Colonic mucosa (tissue), 4 donors: ENCODE measurements at regions of chr6 and their contacts with region 1.

Region 1: GRCh38 chr6:116969211-116969863 is 92.3 kb downstream of the RFX6 start:
- DNase-seq: peak; percentile 47
- H3K4me3 ChIP-seq: no peak overlapping the region
- H3K27ac ChIP-seq: no peak overlapping the region
- H3K4me1 ChIP-seq: no peaks in the 10 kb centered on the region
- H3K27me3 ChIP-seq: no peaks in the 10 kb centered on the region
- CTCF ChIP-seq: peak; percentile 54

Region 2: DNA sequence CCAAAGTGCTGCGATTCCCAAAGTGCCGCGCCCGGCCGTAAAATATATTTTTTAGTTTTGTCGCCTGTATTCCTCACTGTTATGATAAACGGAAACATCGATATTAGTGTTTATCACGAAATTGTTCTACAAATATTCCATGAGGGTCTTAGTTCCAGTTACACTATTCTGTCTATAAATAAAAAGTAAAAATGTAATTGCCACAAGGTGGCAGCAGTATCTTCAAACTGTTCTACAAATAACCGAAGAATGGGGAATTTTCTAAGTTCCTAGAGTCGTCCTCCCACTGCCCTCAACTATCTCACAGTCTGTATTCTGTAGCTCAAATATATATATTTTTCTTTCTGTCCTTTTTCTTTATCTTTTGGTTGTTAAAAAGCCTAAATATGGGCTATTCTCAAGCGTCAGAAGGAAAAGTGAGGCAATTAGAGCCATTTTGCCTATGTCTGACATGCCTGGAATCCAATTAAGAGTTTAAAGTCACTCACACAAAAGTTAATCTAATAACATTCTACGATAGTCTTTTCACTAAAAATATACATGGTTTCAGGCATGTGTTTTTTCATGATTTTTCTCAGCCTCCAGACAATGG is 189.7 kb before region 1 on chr6:
- intact Hi-C with region 1: loop called (anchors 10 kb)
- DNase-seq: no peak
- H3K4me3 ChIP-seq: no peak overlapping the region
- H3K27ac ChIP-seq: no peak overlapping the region
- H3K4me1 ChIP-seq: no peaks in the 10 kb centered on the region
- H3K27me3 ChIP-seq: no peaks in the 10 kb centered on the region
- CTCF ChIP-seq: no peak

Region 3: DNA sequence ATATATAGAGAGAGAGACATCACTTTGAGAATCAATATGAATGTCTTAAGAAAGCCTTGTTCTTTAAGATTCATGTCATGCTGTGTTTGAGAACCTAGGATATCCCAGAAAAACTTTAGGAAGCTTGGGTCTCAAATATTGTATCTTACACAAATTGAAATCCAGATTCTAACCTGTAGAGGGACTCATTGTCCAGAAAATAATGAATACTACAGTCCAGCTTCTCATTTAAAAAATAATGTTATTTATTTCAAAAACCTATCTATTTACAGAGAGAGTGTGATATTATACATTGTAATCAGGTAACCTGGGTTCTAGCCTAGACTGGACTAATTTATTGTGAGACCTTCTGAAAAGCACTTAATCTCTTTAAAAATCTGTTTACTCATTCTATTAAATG is 88.1 kb before region 1 on chr6:
- intact Hi-C with region 1: loop called (anchors 2 kb)
- DNase-seq: no peak
- H3K4me3 ChIP-seq: no peak overlapping the region
- H3K27ac ChIP-seq: no peak overlapping the region
- H3K4me1 ChIP-seq: no peaks in the 10 kb centered on the region
- H3K27me3 ChIP-seq: peaks cover 15% of the 10 kb centered on the region
- CTCF ChIP-seq: peak; percentile 12

Region 4: DNA sequence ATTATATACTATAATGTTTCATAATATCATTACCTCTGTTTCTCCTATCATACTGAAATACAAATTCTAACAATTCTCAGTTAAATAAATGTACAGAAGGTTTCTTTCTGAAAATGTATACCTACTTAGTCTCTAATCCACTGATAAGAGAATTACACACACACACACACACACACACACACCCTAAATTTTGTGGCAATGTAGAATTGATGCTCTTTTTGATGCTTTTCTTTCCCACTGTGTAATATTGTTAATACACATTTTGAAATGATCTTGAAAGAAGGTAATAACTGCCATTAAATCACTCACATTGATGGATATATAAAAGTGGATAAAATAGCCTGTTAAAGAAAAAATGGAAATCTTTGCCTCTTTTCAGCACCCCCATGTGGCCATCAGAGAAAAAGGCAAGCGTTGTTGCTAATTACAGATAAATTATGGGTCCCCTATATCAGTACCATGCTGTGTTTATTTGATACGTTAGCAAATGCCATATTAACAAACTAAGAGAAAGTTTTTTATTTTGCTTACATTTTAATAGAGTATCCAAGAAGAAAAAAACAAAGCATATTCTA is 219.4 kb after region 1 on chr6:
- intact Hi-C with region 1: loop called (anchors 5 kb)
- DNase-seq: no peak
- H3K4me3 ChIP-seq: no peak overlapping the region
- H3K27ac ChIP-seq: no peak overlapping the region
- H3K4me1 ChIP-seq: no peaks in the 10 kb centered on the region
- H3K27me3 ChIP-seq: no peaks in the 10 kb centered on the region
- CTCF ChIP-seq: no peak

Region 5: GRCh38 chr6:117317261-117317660 is 347.9 kb after region 1 on chr6:
- intact Hi-C with region 1: loop called (anchors 5 kb)
- DNase-seq: no peak
- H3K4me3 ChIP-seq: no peak overlapping the region
- H3K27ac ChIP-seq: no peak overlapping the region
- H3K4me1 ChIP-seq: no peaks in the 10 kb centered on the region
- H3K27me3 ChIP-seq: no peaks in the 10 kb centered on the region
- CTCF ChIP-seq: no peak